Posterior vena cava (tissue), 2 donors: ENCODE measurements at regions of chr10 and their contacts with region 1.

Region 1: DNA sequence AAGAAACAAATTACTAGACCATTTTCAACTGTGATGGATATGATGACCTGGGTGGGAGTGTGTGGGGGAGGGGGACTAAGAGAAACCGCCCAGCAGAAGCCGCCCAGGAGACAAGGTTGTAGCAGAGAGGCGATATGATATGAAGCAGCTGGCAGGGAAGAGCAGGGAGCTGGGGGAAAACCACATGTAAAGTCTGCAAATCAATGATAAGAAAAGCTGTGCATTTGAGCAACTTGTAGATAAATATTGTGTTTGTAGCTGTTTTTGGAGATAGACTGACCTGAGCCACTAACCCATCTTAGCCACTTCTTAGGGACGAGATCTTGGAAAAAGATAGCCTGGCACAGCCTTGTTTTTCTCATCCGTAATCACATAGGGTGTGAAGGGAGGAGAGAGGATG is 252.6 kb downstream of the SEC23IP start:
- DNase-seq: no peak

Region 2: GRCh38 chr10:119480667-119481066 is 664.4 kb before region 1 on chr10:
- intact Hi-C with region 1: no loop called
- DNase-seq: no peak

Region 3: GRCh38 chr10:120205368-120206018 is 60.4 kb after region 1 on chr10:
- intact Hi-C with region 1: loop called in 1 of 2 experiments (anchors 2 kb)
- DNase-seq: no peak

Region 4: DNA sequence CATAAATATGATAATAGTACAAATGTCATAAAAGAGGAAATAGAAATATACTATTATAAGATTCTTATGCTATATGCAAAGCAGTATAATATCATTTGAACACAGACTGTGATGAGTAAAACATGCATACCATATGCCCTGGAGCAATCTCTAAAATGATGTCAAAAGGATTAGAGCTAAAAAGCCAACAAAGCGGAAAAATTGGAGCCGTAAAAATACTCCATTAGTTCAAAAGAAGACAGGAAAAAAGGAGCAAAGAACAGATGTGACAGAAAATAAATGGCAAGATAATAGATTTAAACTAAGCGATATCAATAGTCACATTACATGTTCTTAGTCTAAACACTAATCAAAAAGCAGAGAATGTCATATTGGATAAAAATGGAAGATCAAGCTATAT is 120.9 kb after region 1 on chr10:
- intact Hi-C with region 1: no loop called
- DNase-seq: no peak

Region 5: DNA sequence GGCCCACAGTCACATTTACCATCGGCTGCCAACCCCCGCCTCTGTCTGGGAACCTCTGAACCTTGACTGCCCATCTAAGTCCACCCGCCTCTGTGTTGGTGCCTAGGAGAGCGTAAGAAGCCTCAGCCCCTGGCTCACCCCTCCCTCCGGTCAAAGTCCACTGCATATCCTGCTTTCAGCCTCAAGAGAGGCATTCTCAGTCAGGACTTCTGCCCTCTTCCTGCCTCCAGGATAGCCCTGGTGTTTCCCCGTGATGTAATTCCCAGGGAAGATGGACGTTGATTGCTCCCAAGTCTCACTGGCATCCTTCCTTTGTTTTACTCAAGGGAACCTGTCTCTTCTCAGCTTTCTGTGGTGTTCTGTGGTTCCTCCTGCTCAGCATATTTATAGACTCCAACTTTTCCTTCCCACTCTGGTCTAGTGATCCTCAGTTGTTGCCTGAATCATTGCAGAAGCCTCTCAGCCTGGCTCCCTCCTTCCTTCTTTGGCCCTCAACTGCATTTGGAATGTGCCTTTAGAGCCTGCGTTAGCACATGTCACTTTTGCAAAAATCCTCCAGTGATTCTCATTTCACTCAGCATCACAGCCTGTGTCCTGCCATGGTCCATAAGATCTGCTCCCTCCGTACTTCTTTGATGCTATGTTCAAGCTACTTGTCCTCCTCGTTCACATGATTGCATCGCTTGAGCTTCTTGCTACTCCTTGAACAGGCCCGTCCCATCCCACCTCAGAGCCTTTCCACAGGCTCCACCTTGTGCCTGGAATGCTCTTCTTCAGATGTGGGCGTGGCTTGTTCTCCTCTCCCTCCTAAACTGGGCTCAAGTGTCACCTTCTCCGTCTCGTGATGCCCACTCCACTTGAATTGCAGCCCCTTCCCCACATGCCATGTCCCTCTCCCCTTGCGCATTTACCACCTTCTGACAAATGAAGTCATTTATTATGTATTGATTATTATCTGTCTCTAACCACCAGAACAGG is 436.1 kb after region 1 on chr10:
- intact Hi-C with region 1: no loop called
- DNase-seq: no peak